Left ventricle myocardium superior (tissue), 1 donor: ENCODE measurements at regions of chr6 and their contacts with region 1.

Region 1: GRCh38 chr6:57316581-57317059 is 810 bp upstream of the PRIM2 start:
- DNase-seq: peak; percentile 84
- ATAC-seq: peak; percentile 95

Region 2: DNA sequence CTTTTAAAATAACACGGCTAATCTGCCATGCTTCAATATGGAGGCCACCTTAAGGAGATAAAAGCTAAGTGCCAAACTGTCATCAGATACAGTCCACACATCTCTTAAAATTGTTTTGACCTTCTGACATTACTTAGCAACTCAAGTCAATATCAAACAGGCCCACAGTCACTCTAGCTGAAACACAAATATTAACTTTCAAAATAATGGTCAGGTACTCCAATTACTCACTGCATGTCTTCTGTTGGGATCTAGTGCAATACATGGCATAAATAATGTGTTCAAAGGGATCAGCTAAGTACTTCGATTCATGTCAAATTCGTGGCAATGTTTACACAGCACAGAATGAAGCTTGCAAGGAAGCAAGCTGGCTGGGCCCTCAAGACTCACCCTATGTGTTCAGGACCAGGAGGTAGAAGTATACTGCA is 495.6 kb before region 1 on chr6:
- intact Hi-C with region 1: no loop called
- DNase-seq: no peak
- ATAC-seq: peak; percentile 34

Region 3: DNA sequence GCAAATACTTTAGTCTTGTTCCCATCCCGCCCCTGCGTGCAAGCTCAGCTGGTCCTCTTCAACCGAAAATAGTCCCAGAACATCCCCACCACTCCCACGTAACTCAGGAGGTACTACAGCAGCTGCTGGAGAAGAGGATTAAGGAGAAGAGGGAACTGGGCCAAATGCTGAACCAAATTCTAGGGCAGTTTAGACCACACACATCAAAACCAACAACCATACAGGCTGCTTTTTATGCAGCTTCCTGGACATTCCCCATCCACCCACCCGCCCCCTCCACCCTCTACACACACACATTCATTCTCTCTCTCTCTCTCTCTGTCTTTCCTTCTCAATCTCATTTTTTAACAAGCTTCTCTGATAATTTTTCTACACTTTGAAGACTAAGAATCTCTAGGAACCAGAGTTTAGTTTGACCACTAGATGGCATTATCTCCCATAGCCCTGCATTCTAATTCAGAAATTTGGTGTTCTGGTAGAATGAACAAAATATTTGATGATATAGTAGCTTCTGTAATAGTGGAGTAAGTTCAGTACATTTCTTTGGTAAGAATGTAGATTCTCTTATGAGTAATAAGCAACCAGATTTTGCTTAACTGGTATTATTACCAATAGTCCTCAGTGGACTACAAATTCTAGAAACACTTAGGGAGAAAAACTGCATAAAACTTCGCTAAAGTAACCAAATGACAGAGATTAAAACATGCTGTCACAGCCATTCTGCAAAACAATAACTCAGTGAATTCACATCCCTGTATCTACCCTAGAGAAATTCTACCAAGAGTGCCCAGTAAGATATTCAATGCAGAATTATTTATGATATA is 413.8 kb before region 1 on chr6:
- intact Hi-C with region 1: loop called (anchors 2 kb)
- DNase-seq: no peak
- ATAC-seq: peak; percentile 56

Region 4: GRCh38 chr6:57172136-57173055 is 144.2 kb before region 1 on chr6 and contains the start of gene BAG2:
- intact Hi-C with region 1: loop called (anchors 10 kb)
- DNase-seq: peak; percentile 93
- ATAC-seq: peak; percentile 97
- total RNA-seq, gene BAG2: 14.8 TPM

Region 5: GRCh38 chr6:57190140-57190539 is 126.5 kb before region 1 on chr6:
- intact Hi-C with region 1: no loop called
- DNase-seq: no peak
- ATAC-seq: no peak

Region 6: DNA sequence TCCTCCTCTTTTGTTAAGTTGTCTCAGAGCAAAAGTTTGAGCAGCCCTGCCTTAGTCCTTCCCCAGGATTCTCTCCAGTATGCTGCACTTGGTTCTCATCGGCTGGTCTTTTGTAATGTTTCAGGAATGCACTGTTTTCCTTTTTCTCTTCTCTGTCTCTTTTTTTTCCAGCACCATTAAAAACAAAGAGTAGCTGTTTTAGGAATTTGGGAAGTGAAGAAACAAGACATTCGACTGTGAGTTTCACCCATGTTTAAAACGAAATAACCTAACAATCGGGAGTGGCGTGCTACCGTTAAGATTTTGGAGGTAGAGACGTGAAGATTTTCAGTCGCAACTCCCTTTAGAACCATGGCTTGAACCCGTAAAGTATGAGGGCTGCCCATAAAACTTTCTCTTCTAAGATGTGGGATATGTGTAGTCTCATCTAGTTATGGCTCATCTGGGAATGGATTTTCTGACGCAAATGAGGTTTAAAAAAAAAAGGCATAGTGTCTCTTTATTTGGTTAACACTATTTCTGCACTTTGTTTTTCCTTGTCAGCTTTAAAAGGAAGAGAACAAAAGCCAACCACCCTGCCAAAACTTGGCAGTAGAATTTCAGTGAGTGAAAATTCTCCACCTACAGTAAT is 58.6 kb before region 1 on chr6:
- intact Hi-C with region 1: no loop called
- DNase-seq: no peak
- ATAC-seq: peak; percentile 59